HepG2 (cell line): ENCODE measurements at regions of chr7 and their contacts with region 1.

Region 1: DNA sequence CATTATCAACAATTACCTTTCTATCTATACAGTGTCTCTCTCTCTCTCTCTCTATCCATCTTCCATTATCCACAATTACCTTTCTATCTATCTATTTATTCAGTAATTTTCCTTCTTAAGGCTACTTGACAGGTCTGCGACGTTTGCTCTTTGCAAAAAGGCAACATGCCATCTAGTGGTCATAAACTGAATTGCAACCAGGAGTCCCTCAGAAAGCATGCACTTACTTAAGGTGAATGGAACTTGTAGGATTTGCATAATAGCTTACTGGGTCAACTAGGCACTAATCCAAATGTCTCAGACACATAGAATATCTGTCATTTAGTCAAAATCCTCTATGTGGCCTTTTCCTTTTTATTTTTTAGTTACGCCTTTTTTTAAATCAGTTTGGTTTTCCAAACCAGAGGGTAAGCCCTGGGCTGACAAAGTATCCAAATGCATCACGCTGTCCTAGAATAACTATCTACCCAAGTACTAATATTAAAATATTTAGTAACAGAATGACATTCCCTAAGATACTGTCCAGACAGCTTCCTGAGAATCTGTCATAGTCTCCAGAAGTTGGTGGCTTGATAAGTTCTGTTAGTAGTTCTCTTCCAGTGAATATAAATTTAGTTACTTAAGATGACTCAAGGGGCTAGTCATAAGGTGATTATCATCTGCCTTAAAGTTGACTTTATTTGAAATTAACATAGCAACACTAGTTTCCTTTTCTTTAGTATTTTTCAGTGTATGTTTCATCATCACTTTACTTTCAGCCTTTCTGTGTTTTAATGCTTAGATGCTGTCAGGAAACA is 208.3 kb downstream of the PPP1R3A start:
- DNase-seq: peak; percentile 63
- ATAC-seq: peak; percentile 86
- H3K4me3 ChIP-seq: no peak overlapping the region
- H3K27ac ChIP-seq: no peak overlapping the region
- H3K4me1 ChIP-seq: no peaks in the 10 kb centered on the region
- H3K27me3 ChIP-seq: no peaks in the 10 kb centered on the region
- CTCF ChIP-seq: peak; percentile 73
- EP300 ChIP-seq: no peak
- POLR2A ChIP-seq: no peak
- RAD21 ChIP-seq: no peak

Region 2: DNA sequence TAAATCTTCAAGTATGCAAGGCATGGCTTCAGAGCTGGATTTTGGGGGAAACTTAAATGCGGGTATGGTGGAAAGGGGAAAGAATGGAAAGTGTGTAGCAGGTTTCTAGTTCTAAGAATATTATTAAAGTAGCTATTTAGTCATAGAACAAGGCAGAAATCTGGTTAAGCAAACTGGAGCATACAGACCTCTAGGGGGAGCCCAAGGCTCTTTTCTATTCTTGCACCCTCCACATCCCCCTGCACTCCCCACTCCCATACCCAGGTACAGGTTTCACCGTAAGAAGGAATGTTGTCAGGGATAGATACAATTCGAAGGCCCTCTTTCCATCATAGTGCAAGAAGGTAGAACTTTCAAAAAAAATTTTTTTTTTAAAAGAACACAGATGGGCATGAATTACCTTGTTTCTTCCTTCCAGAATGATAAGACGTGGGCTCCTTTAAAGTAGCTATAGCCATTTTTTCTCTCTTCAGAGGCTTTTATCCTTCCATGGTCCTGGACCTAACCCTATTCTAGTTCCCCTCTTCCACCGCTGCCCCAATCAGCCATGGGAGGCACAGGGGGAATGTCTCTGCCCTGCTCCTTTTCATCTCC is 550.7 kb before region 1 on chr7:
- CTCF ChIA-PET with region 1: no interaction called
- POLR2A ChIA-PET with region 1: no interaction called
- in situ Hi-C with region 1: no loop called
- intact Hi-C with region 1: loop called (anchors 10 kb)
- DNase-seq: peak; percentile 30
- ATAC-seq: peak; percentile 87
- H3K4me3 ChIP-seq: no peak overlapping the region
- H3K27ac ChIP-seq: no peak overlapping the region
- H3K4me1 ChIP-seq: no peaks in the 10 kb centered on the region
- H3K27me3 ChIP-seq: no peaks in the 10 kb centered on the region
- CTCF ChIP-seq: peak; percentile 57
- EP300 ChIP-seq: no peak
- POLR2A ChIP-seq: no peak
- RAD21 ChIP-seq: no peak